IMR-90 (cell line): ENCODE measurements at regions of chr1 and their contacts with region 1.

Region 1: DNA sequence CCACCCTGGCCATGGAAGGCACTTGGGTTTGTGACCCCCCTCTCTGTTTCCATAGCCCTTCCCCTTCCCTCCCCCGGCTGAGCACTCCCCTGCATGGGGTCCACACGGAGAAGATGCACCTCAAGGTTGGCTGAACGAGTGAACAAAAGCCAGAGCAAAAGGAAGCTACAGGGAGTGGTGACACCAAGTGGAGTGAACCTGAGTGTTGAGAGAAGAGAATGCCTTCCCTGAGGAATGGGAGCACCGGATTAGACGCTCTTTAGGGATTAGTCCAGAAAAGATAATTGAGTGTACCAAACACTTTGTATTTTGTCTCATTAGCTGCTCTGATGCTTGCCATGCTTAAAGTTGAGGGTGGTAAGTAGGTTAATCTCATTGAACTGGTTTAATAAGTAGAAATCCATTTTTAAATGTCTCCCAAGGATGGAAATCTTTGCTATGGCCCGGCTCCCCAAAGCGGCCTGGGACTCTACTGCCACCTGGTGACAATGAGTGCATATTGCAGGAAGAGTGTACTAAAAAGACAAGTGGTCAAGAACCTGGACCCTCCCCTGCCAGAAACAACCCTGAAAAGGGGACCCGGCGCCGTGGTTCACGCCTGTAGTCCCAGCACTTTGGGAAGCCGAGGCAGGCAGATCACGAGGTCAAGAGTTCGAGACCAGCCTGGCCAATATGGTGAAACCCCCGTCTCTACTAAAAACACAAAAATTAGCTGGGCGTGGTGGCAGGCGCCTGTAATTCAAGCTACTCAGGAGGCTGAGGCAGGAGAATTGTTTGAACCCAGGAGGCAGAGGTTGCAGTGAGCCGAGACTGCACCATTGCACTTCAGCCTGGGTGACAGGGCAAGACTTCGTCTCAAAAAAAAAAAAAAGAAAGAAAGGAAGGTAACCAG is 150.6 kb upstream of the ZC3H12A start:
- DNase-seq: peak; percentile 3
- ATAC-seq: peak; percentile 66; the same call in 1 of the 2 replicates
- H3K4me3 ChIP-seq: no peak overlapping the region
- H3K27ac ChIP-seq: no peak overlapping the region
- H3K4me1 ChIP-seq: no peaks in the 10 kb centered on the region
- H3K27me3 ChIP-seq: peaks cover 6% of the 10 kb centered on the region; the same call in 1 of the 2 replicates
- CTCF ChIP-seq: peak; percentile 59
- POLR2A ChIP-seq: no peak
- RAD21 ChIP-seq: peak; percentile 72

Region 2: GRCh38 chr1:36516372-36517325 is 807.1 kb before region 1 on chr1:
- CTCF ChIA-PET with region 1: no interaction called
- POLR2A ChIA-PET with region 1: no interaction called
- dilution Hi-C with region 1: no loop called
- in situ Hi-C with region 1: no loop called
- intact Hi-C with region 1: loop called (anchors 5 kb)
- DNase-seq: peak; percentile 43
- ATAC-seq: peak; percentile 85
- H3K4me3 ChIP-seq: no peak overlapping the region
- H3K27ac ChIP-seq: no peak overlapping the region
- H3K4me1 ChIP-seq: no peaks in the 10 kb centered on the region
- H3K27me3 ChIP-seq: no peaks in the 10 kb centered on the region; the same call in 1 of the 2 replicates
- CTCF ChIP-seq: peak; percentile 71
- POLR2A ChIP-seq: no peak
- RAD21 ChIP-seq: peak; percentile 75

Region 3: DNA sequence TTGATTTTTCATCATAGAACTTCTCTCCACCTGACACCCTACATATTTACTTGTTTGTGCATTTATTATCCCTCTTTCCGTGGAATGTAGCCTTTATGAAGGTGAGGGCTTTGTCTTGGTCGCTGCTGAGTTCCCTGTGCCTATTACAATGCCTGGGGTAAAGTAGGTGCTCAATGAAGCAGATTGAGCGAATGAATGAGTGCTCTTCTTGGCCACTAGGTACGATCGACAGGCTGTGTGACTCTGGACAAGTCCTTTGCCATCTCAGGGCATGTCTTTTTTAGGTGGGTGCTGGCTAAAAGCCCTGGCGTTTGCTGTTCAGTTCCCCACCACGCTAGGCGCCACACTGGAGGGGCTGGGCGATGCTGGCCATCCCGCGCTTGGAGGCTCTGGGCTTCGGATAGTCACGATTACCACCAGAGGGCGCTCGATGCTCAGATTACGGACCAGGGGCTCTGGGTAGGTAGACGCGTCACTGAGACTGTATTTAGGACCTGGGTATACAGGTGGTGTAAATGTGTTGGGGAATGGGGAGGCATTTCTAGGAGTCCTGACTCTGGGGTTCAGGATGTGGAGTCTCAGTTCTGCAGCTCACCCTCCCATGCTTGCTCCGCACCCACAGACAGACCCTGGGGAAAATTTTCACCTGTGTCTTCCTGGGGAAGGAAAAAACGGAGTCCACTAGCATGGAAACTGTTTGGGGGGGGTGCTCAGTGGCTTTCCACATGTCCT is 770.0 kb before region 1 on chr1:
- CTCF ChIA-PET with region 1: no interaction called
- POLR2A ChIA-PET with region 1: no interaction called
- dilution Hi-C with region 1: no loop called
- in situ Hi-C with region 1: no loop called
- intact Hi-C with region 1: loop called (anchors 1 kb)
- DNase-seq: peak; percentile 25
- ATAC-seq: peak; percentile 88
- H3K4me3 ChIP-seq: no peak overlapping the region
- H3K27ac ChIP-seq: no peak overlapping the region
- H3K4me1 ChIP-seq: no peaks in the 10 kb centered on the region
- H3K27me3 ChIP-seq: peaks cover 12% of the 10 kb centered on the region
- CTCF ChIP-seq: peak; percentile 61
- POLR2A ChIP-seq: no peak
- RAD21 ChIP-seq: peak; percentile 64

Region 4: DNA sequence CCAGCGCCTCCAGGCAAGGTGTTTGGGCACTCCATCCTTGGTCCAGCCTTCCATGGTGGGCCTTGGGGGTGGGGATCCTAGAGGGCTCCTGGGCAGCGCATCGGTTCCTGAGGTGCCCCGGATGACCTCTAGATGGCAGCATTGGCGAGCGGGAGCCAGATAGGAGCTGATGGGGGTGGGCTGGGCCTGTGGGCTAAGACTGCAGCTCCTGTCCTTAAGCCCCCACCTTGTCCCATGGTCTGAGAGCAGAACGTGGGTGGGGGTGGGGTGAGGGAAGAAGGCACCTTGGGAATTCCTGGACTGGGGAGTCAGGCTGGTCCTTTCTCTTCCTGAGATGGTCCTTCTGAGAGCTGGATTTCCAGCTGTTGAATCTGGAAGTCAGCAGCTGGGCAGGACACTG is 747.6 kb before region 1 on chr1:
- CTCF ChIA-PET with region 1: no interaction called
- POLR2A ChIA-PET with region 1: no interaction called
- dilution Hi-C with region 1: no loop called
- in situ Hi-C with region 1: loop called (anchors 25 kb)
- intact Hi-C with region 1: loop called (anchors 1 kb)
- DNase-seq: peak; percentile 19
- ATAC-seq: peak; percentile 97
- H3K4me3 ChIP-seq: no peak overlapping the region
- H3K27ac ChIP-seq: no peak overlapping the region
- H3K4me1 ChIP-seq: no peaks in the 10 kb centered on the region
- H3K27me3 ChIP-seq: peaks cover 6% of the 10 kb centered on the region
- CTCF ChIP-seq: peak; percentile 78
- POLR2A ChIP-seq: no peak
- RAD21 ChIP-seq: peak; percentile 82